Naive thymus-derived CD4-positive, alpha-beta T cell (primary cell): ENCODE measurements at regions of chrX and their contacts with region 1.

Region 1: DNA sequence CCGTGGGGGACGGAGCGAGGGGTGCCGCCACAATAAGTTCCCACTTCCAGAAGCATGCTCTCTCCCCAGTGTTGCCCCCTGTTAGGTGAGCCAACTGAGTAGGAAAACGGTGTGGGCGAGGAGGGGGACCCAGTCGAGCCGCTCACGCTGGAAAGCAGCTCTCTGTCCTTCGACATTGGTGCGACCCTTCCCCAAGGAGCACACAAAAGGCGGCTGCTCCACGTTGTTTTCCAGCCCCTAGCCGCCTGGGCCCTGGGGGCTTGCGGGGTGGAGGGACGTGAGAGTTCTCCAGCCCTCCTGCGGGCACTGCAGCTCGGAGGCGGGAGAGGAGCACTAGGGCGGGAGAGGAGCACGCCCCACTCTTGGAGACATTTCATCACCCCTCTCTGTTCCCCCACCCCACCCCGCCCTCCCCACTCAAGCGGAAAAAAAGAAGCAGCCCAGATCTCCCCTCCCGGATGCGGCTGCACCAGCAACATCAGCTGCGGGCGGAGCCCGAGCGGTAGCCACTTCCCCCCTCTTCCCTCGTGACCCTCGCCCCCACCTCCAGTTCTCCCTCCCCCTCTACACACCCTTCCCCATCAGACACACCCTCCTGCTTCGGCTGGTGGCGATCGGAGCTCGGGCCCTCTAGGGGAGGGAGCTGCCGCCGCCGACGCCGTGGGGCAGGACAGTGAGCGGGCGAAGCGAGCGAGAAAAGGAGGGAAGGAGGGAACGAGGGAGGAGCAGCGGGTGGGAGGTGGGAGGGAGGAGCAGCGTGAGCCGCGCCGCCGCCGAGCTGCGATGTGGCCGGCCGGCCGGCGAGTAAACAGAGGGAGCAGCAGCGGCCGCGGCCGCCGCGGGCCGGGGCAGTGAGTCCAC is at the start of gene DOCK11:
- DNase-seq: peak; percentile 42 to 82 (median 77)
- ATAC-seq: peak; percentile 87
- H3K4me3 ChIP-seq: peak within 1 kb of the TSS; percentile 90
- H3K4me3 Mint-ChIP-seq: peak within 1 kb of the TSS; percentile 89 to 100 (median 98)
- H3K27ac ChIP-seq: peak within 1 kb of the TSS; percentile 87
- H3K27ac Mint-ChIP-seq: peak within 1 kb of the TSS; percentile 90 to 99 (median 97)
- H3K4me1 ChIP-seq: peaks cover 15 to 25% of the 10 kb centered on the region in 2 donors
- H3K4me1 Mint-ChIP-seq: peaks cover 13 to 29% (median 24%) of the 10 kb centered on the region in 7 donors
- H3K27me3 ChIP-seq: no peaks in the 10 kb centered on the region
- H3K27me3 Mint-ChIP-seq: no peaks in the 10 kb centered on the region
- total RNA-seq, gene DOCK11: 68.9 to 115 (median 102) TPM

Region 2: DNA sequence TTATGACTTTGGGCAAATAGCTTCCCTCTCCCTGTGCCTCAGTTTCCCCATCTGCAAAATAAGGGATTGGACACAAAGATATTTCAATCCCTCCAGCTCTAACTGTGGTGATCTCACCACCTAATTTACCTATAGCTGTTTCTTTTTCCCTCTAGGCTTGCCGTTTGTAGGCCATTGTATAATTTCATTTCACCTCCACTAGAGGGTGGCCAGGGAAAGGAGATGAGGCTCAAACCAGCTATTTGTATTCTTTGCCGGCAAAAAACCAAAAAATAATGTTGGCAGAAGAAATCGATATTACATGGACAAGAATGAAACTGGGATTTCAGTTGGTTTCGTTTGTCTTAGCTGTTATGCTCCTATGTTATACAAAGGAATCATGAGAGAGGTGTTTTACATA is 35.8 kb before region 1 on chrX:
- CTCF ChIA-PET with region 1: interaction called, 3 read pairs
- POLR2A ChIA-PET with region 1: no interaction called
- intact Hi-C with region 1: loop called (anchors 1 to 5 kb)
- DNase-seq: peak in 7 of 9 donors; percentile 22 to 54 (median 35)
- ATAC-seq: peak; percentile 55
- H3K4me3 ChIP-seq: no peak overlapping the region
- H3K4me3 Mint-ChIP-seq: no peak overlapping the region
- H3K27ac ChIP-seq: no peak overlapping the region
- H3K27ac Mint-ChIP-seq: peak overlapping the region in 1 of 9 donors; percentile 76
- H3K4me1 ChIP-seq: no peaks in the 10 kb centered on the region
- H3K4me1 Mint-ChIP-seq: peaks cover 0 to 5% (median 0%) of the 10 kb centered on the region in 7 donors
- H3K27me3 ChIP-seq: no peaks in the 10 kb centered on the region
- H3K27me3 Mint-ChIP-seq: peaks cover 0 to 3% (median 0%) of the 10 kb centered on the region in 5 donors

Region 3: DNA sequence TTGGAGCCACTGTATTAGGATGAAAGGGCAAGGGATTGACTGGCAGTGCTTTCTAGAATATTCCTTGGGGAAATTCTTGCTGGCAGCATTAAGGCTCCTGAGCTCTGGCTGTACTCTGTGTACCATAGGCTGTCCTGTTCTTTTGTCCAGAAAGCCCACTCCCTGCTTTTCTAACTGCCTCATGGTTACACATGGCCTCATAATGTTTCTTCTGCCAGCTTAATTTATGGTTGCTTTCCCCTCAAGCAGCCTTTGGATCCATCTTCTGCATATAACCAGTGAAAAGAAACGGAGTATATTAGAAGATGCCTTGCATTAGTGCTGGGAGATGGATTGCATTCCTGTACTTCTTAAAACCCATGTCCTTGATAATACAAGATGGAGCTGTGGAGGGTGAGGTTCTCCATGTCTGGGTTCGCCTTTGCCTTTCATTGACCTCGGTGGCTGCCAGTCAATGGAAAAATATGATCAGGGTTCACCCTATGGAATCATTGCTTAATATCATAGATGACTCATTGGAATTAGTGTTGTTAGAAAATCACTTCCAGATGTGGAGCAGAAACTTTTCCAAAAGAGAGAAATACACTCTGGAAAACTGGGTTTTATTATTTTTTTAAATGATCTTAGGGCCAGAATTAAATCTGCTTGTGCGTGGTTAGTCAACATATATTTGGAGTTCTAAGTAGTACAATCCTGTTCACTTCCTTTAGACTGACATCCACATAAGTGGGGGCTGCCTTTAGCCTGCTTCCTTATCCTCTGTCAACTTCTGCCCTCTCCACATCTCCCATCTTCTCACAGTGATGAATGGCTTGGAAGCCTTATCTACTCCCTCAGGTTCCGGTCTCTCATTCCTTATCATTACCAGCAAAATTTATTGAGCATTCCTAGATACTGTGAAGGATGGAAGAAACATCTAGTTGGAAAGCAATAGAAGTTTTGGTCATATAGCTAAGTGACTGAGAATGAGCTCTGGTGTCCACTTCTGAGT is 25.2 kb after region 1 on chrX:
- CTCF ChIA-PET with region 1: interaction called, 3 read pairs
- POLR2A ChIA-PET with region 1: interaction called, 55 read pairs
- intact Hi-C with region 1: no loop called
- DNase-seq: no peak
- ATAC-seq: no peak
- H3K4me3 ChIP-seq: no peak overlapping the region
- H3K4me3 Mint-ChIP-seq: peak overlapping the region in 9 of 10 donors; percentile 2 to 59 (median 20)
- H3K27ac ChIP-seq: peak overlapping the region; percentile 55
- H3K27ac Mint-ChIP-seq: peak overlapping the region in 8 of 9 donors; percentile 57 to 94 (median 84)
- H3K4me1 ChIP-seq: peaks cover 43 to 51% of the 10 kb centered on the region in 2 donors
- H3K4me1 Mint-ChIP-seq: peaks cover 20 to 79% (median 73%) of the 10 kb centered on the region in 7 donors
- H3K27me3 ChIP-seq: no peaks in the 10 kb centered on the region
- H3K27me3 Mint-ChIP-seq: no peaks in the 10 kb centered on the region

Region 4: DNA sequence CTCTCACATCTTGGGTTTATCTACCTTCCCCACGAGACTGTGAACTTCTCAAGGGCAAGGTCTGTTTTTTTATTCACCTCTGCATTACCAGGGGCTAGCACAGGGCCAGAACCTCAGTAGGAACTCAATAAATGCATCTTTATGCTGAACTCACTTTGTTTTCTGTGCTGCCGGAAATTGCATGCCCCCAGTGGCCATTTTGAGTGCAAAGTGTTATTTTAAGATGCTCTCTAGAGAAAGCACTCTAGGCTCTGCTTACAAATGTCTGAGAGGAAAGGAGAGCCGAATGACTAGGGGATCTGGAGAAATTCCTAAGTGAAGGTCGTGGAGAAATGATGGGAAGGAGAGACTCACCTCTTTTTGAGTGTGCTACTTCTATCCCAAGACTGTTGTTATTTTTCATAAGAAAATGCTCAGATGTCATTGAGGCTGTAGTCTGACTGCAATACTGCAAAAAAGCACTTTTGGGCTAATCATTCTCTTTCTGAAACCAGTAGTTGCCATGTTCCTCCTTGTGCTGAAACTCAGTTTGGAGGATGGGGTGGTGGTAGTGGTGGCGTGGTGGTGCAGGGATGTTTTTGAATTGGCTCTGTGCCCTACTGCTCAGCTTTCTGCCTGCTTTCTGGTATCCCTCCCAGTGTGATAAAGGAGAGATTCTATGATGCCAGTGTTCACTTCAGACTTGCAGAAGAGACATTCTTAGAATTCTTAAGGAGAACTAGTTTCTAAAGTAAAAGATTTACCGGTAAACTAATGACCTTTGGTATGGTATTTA is 41.6 kb after region 1 on chrX:
- CTCF ChIA-PET with region 1: interaction called, 4 read pairs
- POLR2A ChIA-PET with region 1: interaction called, 167 read pairs
- intact Hi-C with region 1: loop called (anchors 1 to 2 kb)
- DNase-seq: peak in 7 of 9 donors; percentile 25 to 54 (median 49)
- ATAC-seq: peak; percentile 86
- H3K4me3 ChIP-seq: peak overlapping the region; percentile 31
- H3K4me3 Mint-ChIP-seq: peak overlapping the region; percentile 43 to 76 (median 60)
- H3K27ac ChIP-seq: peak overlapping the region; percentile 63
- H3K27ac Mint-ChIP-seq: peak overlapping the region; percentile 52 to 91 (median 79)
- H3K4me1 ChIP-seq: peaks cover 29 to 31% of the 10 kb centered on the region in 2 donors
- H3K4me1 Mint-ChIP-seq: peaks cover 23 to 79% (median 70%) of the 10 kb centered on the region in 7 donors
- H3K27me3 ChIP-seq: no peaks in the 10 kb centered on the region
- H3K27me3 Mint-ChIP-seq: no peaks in the 10 kb centered on the region

Region 5: DNA sequence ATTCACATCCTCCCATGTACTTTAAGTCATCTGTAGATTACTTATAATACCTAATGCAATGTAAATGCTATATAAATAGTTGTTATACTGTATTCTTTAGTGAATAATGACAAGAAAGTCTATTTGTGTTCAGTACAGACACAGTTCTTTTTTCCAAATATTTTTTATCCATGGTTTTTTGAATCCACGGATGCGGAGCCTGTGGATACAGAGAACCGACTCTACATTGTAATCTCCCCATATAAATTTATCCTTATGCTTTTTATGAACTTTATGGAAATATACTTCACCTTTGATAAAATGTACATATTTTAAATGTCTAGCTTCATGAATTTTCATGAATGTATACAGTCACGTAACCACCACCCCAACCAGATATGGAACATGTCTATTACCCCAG is 88.5 kb after region 1 on chrX:
- CTCF ChIA-PET with region 1: no interaction called
- POLR2A ChIA-PET with region 1: no interaction called
- intact Hi-C with region 1: no loop called
- DNase-seq: no peak
- ATAC-seq: no peak
- H3K4me3 ChIP-seq: no peak overlapping the region
- H3K4me3 Mint-ChIP-seq: no peak overlapping the region
- H3K27ac ChIP-seq: no peak overlapping the region
- H3K27ac Mint-ChIP-seq: peak overlapping the region in 1 of 9 donors; percentile 45
- H3K4me1 ChIP-seq: no peaks in the 10 kb centered on the region
- H3K4me1 Mint-ChIP-seq: no peaks in the 10 kb centered on the region
- H3K27me3 ChIP-seq: no peaks in the 10 kb centered on the region
- H3K27me3 Mint-ChIP-seq: no peaks in the 10 kb centered on the region

Region 6: GRCh38 chrX:118603981-118604380 is 108.7 kb after region 1 on chrX:
- CTCF ChIA-PET with region 1: interaction called, 6 read pairs
- POLR2A ChIA-PET with region 1: no interaction called
- intact Hi-C with region 1: loop called in 1 of 2 experiments (anchors 5 kb)
- DNase-seq: peak in 8 of 9 donors; percentile 2 to 40 (median 25)
- ATAC-seq: peak; percentile 77
- H3K4me3 ChIP-seq: no peak overlapping the region
- H3K4me3 Mint-ChIP-seq: peak overlapping the region in 6 of 10 donors; percentile 3 to 50 (median 39)
- H3K27ac ChIP-seq: no peak overlapping the region
- H3K27ac Mint-ChIP-seq: peak overlapping the region in 8 of 9 donors; percentile 33 to 91 (median 76)
- H3K4me1 ChIP-seq: no peaks in the 10 kb centered on the region
- H3K4me1 Mint-ChIP-seq: peaks cover 8 to 29% (median 20%) of the 10 kb centered on the region in 7 donors
- H3K27me3 ChIP-seq: no peaks in the 10 kb centered on the region
- H3K27me3 Mint-ChIP-seq: no peaks in the 10 kb centered on the region

Region 7: GRCh38 chrX:119753571-119754257 is 1258.4 kb after region 1 on chrX:
- CTCF ChIA-PET with region 1: no interaction called
- POLR2A ChIA-PET with region 1: no interaction called
- intact Hi-C with region 1: loop called in 1 of 2 experiments (anchors 5 kb)
- DNase-seq: peak in 7 of 9 donors; percentile 77 to 89 (median 80)
- ATAC-seq: peak; percentile 83
- H3K4me3 ChIP-seq: no peak overlapping the region
- H3K4me3 Mint-ChIP-seq: peak overlapping the region; percentile 40 to 81 (median 70)
- H3K27ac ChIP-seq: peak overlapping the region; percentile 76
- H3K27ac Mint-ChIP-seq: peak overlapping the region; percentile 90 to 99 (median 96)
- H3K4me1 ChIP-seq: peaks cover 38 to 39% of the 10 kb centered on the region in 2 donors
- H3K4me1 Mint-ChIP-seq: peaks cover 21 to 50% (median 40%) of the 10 kb centered on the region in 7 donors
- H3K27me3 ChIP-seq: no peaks in the 10 kb centered on the region
- H3K27me3 Mint-ChIP-seq: no peaks in the 10 kb centered on the region